CD4-positive, alpha-beta memory T cell (primary cell): ENCODE measurements at regions of chr12 and their contacts with region 1.

Region 1: GRCh38 chr12:49043856-49044258 is 16.7 kb downstream of the KMT2D start:
- DNase-seq: peak; percentile 74 to 84 (median 77)
- H3K4me3 ChIP-seq: no peak overlapping the region
- H3K4me3 Mint-ChIP-seq: no peak overlapping the region
- H3K27ac ChIP-seq: no peak overlapping the region
- H3K27ac Mint-ChIP-seq: peak overlapping the region; percentile 24 to 88 (median 75)
- H3K4me1 ChIP-seq: no peaks in the 10 kb centered on the region
- H3K4me1 Mint-ChIP-seq: peaks cover 3 to 10% (median 4%) of the 10 kb centered on the region in 4 donors
- H3K27me3 ChIP-seq: no peaks in the 10 kb centered on the region
- H3K27me3 Mint-ChIP-seq: no peaks in the 10 kb centered on the region

Region 2: GRCh38 chr12:48995061-48995879 is 48.6 kb before region 1 on chr12:
- CTCF ChIA-PET with region 1: interaction called, 17 read pairs
- POLR2A ChIA-PET with region 1: interaction called, 3 read pairs
- intact Hi-C with region 1: no loop called
- DNase-seq: peak; percentile 31 to 53 (median 40)
- H3K4me3 ChIP-seq: no peak overlapping the region
- H3K4me3 Mint-ChIP-seq: peak overlapping the region in 6 of 8 donors; percentile 47 to 92 (median 69)
- H3K27ac ChIP-seq: no peak overlapping the region
- H3K27ac Mint-ChIP-seq: peak overlapping the region in 5 of 7 donors; percentile 51 to 93 (median 89)
- H3K4me1 ChIP-seq: peaks cover 40% of the 10 kb centered on the region
- H3K4me1 Mint-ChIP-seq: peaks cover 13 to 44% (median 25%) of the 10 kb centered on the region in 4 donors
- H3K27me3 ChIP-seq: peaks cover 18% of the 10 kb centered on the region
- H3K27me3 Mint-ChIP-seq: peaks cover 34 to 43% of the 10 kb centered on the region in 2 donors

Region 3: DNA sequence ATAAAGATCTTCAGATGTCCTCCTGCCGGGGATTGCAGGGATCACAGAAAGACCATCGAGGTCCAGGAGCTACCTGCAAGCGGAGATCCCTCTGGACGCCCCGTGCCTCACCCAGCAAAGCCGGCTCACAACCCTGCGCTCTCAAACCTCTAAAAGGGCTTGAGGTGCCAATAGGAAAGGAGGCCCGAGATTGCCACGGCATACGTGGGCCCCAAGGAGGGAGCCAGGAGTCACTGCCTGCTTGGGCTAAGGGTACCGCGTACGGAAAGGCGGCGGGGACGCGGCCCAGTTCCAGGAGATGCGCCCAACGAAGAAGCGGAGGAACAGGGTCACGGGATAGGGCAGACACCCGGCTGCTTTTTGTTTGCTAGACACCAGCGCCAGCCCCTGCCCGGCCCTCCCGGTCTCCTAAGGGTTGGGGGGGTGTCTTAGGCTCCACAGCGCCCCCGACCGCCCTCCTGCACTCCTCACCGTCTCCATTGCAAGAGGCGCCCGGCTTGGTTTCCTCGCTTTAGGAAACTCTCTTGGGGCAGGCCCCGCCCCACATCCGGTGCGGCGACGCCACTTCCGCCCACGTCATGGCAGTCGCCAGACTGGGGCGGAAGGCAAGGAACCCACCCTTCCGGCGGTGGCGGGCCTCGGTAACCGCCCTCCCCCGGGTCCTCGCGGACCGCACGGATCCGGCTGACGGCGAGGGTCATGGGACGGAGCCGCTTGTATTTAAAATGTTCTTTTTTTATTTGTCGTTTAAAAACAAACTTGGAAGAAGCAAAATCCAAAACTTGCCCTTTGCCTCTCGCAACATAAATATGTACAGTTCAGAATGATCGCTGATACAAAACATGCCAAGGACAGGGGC is 25.4 kb before region 1 on chr12 and contains the start of gene PRKAG1:
- CTCF ChIA-PET with region 1: interaction called, 12 read pairs
- POLR2A ChIA-PET with region 1: interaction called, 4 read pairs
- intact Hi-C with region 1: no loop called
- DNase-seq: peak; percentile 97 to 98 (median 98)
- H3K4me3 ChIP-seq: peak within 1 kb of the TSS; percentile 94 to 96
- H3K4me3 Mint-ChIP-seq: peak within 1 kb of the TSS; percentile 87 to 99 (median 94)
- H3K27ac ChIP-seq: peak within 1 kb of the TSS; percentile 95
- H3K27ac Mint-ChIP-seq: peak within 1 kb of the TSS; percentile 95 to 100 (median 99)
- H3K4me1 ChIP-seq: peaks cover 24% of the 10 kb centered on the region
- H3K4me1 Mint-ChIP-seq: peaks cover 18 to 51% (median 37%) of the 10 kb centered on the region in 4 donors
- H3K27me3 ChIP-seq: no peaks in the 10 kb centered on the region
- H3K27me3 Mint-ChIP-seq: no peaks in the 10 kb centered on the region
- total RNA-seq, gene PRKAG1: 48.9 to 53.7 TPM

Region 4: DNA sequence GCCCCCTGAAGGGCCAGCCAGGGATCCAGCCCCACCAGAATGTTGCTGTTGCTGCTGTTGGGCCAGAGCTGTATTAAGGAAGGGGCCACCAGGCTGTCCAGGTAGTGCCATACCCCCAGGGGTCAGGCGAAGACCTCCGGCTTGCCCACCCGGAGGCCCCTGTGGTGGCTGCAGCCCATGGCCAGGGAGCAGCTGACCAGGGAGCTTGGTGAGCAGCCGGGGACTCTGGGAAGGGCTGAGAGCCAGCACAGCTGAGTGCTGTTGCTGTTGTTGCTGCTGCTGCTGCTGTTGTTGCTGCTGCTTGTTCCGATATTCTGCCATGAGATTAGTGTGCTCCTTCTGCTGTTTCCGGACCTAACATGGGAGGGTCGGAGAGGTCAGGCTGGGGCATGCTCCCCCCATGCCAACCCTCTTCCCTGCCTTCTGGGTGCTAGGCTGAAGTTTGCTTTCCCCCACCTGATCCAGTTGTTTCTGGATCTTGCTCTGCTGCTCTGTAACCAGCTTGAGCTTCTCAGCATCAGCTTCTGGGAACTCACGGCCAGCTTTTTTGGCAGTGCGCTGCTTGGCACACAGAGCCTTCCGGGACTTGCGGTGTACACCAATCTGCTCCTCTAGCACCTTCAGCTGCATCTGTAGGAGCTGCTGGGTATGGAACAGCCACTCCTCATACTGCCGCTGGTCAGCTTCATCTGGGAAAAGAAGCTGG is 10.1 kb before region 1 on chr12:
- CTCF ChIA-PET with region 1: interaction called, 14 read pairs
- POLR2A ChIA-PET with region 1: interaction called, 6 read pairs
- intact Hi-C with region 1: no loop called
- DNase-seq: no peak
- H3K4me3 ChIP-seq: no peak overlapping the region
- H3K4me3 Mint-ChIP-seq: no peak overlapping the region
- H3K27ac ChIP-seq: no peak overlapping the region
- H3K27ac Mint-ChIP-seq: peak overlapping the region in 2 of 7 donors; percentile 60 to 81
- H3K4me1 ChIP-seq: no peaks in the 10 kb centered on the region
- H3K4me1 Mint-ChIP-seq: peaks cover 0 to 7% (median 0%) of the 10 kb centered on the region in 4 donors
- H3K27me3 ChIP-seq: no peaks in the 10 kb centered on the region
- H3K27me3 Mint-ChIP-seq: no peaks in the 10 kb centered on the region